ENCODE measurements at regions of chr11 and their contacts with region 1.

Region 1: DNA sequence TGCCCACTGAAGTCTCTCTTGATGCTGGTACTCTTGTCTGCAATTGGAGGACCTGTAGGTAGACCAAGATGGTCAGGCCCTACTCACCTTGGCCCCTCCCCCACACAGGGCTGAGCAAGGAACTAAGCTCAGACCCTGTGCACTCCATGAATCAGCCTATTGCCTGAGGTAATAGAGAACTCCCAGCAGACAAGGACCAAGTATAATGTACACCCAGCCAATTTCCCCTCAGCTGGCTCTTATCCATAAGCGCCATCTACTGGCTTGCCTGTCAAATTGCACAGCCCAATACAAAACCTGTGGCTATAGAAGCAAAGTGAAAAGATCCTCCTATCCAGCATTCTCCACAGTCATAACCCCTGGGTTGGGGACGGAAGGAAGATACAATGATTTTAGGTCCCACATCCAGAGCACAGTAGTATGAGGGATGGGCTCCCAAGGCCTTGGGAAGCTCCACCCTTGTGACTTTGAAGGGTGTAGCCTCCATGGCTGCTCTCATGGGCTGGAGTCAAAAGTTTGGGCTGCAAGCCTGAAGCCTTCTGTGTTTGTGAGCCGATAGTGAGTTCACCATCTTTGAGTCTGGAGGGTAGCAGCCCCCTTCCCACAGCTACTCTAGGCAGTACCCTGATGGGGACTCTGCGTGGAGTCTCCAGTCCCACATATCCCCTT is 56.0 kb downstream of the GLYATL2 start:
- DNase-seq: peak; percentile 77
- H3K4me3 ChIP-seq: no peak overlapping the region
- H3K27ac ChIP-seq: peak overlapping the region; percentile 62
- H3K4me1 ChIP-seq: peaks cover 20% of the 10 kb centered on the region
- H3K27me3 ChIP-seq: no peaks in the 10 kb centered on the region
- CTCF ChIP-seq: peak; percentile 94 to 97

Region 2: GRCh38 chr11:57426929-57427726 is 1361.4 kb before region 1 on chr11 and contains the start of gene SLC43A3:
- CTCF ChIA-PET with region 1: no interaction called
- dilution Hi-C with region 1: no loop called
- in situ Hi-C with region 1: no loop called
- intact Hi-C with region 1: no loop called
- DNase-seq: peak; percentile 93
- H3K4me3 ChIP-seq: peak within 1 kb of the TSS; percentile 37 to 58 (median 45)
- H3K27ac ChIP-seq: peak within 1 kb of the TSS; percentile 92
- H3K4me1 ChIP-seq: peaks cover 47% of the 10 kb centered on the region
- H3K27me3 ChIP-seq: no peaks in the 10 kb centered on the region
- CTCF ChIP-seq: no peak
- total RNA-seq, gene SLC43A3: 22.7 to 27.6 TPM

Region 3: DNA sequence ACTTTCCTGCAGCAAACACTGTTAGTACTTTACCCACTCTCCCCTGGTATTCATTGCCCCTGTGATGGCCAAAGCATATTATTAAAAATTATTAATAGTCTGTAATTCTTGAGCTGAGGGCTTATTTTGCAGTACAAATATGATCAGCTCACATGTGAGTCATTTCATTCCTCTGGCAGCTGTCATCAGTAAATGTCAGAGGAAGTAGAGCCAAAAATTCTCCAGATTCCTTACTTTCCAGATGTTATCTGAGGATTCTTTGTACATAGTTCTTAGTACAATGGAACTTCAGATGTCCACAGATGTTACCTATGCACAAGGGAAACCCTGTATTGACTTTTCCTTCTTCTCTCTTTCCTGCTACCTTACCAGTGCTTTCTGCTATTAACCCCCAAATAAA is 394.3 kb before region 1 on chr11:
- CTCF ChIA-PET with region 1: no interaction called
- dilution Hi-C with region 1: no loop called
- in situ Hi-C with region 1: no loop called
- intact Hi-C with region 1: no loop called
- DNase-seq: peak; percentile 73
- H3K4me3 ChIP-seq: no peak overlapping the region
- H3K27ac ChIP-seq: no peak overlapping the region
- H3K4me1 ChIP-seq: peaks cover 25% of the 10 kb centered on the region
- H3K27me3 ChIP-seq: no peaks in the 10 kb centered on the region
- CTCF ChIP-seq: no peak

Region 4: DNA sequence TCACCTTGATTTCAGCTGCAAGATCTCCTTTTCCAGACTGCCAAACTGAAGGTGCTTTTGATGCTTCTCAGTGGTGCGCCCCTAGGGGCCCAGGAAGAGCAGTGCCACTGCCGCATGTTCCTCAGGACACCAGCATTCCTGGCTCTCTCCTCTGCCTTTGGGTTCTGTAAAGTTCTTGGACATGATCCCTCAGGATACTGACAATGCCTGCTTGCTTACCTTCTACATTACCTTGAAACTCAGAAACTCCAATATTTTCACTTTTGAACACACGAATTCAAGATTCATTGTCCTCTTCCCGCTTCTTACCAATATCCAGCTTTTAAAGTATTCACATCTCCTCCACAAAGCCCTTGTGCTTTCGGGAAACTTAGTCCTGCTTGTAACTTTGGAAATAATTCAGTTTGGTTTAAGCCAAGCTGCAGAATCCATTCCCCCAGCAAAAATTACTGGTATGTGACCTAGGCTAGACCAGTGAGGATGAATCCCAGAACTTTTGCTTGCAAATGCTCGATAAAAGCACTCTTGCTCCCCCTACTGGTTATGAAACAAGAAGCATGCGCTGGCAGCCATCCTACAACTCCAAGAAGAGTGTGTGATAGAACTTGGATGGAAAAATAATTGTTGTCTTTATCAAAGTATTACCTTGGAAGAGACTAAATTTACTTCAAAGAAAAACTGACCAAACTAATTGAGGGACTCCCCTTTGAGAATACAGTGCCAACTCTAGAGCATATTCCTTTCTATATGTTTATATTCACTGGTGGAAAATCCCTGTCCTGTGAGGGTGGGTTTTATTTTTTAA is 264.1 kb before region 1 on chr11:
- CTCF ChIA-PET with region 1: no interaction called
- dilution Hi-C with region 1: no loop called
- in situ Hi-C with region 1: no loop called
- intact Hi-C with region 1: loop called (anchors 2 kb)
- DNase-seq: peak; percentile 63
- H3K4me3 ChIP-seq: no peak overlapping the region
- H3K27ac ChIP-seq: no peak overlapping the region
- H3K4me1 ChIP-seq: peaks cover 3% of the 10 kb centered on the region
- H3K27me3 ChIP-seq: no peaks in the 10 kb centered on the region
- CTCF ChIP-seq: peak; percentile 90 to 98

Region 5: GRCh38 chr11:58675334-58676155 is 112.9 kb before region 1 on chr11:
- CTCF ChIA-PET with region 1: no interaction called
- dilution Hi-C with region 1: no loop called
- in situ Hi-C with region 1: loop called in 1 of 2 experiments (anchors 10 kb)
- intact Hi-C with region 1: loop called (anchors 1 kb)
- DNase-seq: peak; percentile 44
- H3K4me3 ChIP-seq: no peak overlapping the region
- H3K27ac ChIP-seq: no peak overlapping the region
- H3K4me1 ChIP-seq: peaks cover 5% of the 10 kb centered on the region
- H3K27me3 ChIP-seq: no peaks in the 10 kb centered on the region
- CTCF ChIP-seq: peak; percentile 97 to 99

Region 6: DNA sequence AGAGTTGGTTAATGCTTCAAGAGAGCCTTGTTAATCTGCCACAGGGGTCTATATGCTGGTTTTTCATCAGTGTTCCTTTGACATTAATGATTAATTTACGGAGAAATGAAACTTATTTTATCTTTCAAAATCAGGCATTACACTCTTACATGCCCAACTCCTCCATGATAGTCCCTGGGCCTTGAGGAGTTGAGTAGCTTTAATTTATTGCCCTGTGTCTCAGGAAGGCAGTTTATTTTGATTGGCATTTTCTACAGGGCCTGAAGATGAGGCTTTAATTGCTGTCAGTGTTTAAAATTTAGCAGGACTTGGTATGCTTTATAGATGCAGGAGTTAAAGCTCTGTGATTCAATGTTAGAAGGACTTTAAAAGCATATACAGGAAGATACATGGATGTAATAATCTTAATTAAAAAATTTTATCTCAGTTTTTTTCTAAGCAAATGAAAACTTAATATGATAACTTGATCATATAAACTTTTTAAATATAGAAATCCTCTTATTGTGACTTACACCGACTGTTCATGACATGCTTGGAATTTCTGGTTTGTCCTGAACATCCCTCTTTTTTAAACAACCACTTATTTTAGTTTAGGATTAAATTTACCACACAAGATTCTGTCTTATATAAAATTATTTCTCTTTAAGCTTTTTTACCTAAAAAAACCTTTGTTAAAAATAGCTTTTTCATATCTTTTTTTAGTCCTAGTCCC is 68.9 kb before region 1 on chr11:
- CTCF ChIA-PET with region 1: no interaction called
- dilution Hi-C with region 1: no loop called
- in situ Hi-C with region 1: no loop called
- intact Hi-C with region 1: loop called (anchors 1 kb)
- DNase-seq: no peak
- H3K4me3 ChIP-seq: no peak overlapping the region
- H3K27ac ChIP-seq: no peak overlapping the region
- H3K4me1 ChIP-seq: no peaks in the 10 kb centered on the region
- H3K27me3 ChIP-seq: no peaks in the 10 kb centered on the region
- CTCF ChIP-seq: no peak

Region 7: GRCh38 chr11:58957923-58958322 is 169.4 kb after region 1 on chr11:
- CTCF ChIA-PET with region 1: no interaction called
- dilution Hi-C with region 1: no loop called
- in situ Hi-C with region 1: no loop called
- intact Hi-C with region 1: no loop called
- DNase-seq: no peak
- H3K4me3 ChIP-seq: no peak overlapping the region
- H3K27ac ChIP-seq: no peak overlapping the region
- H3K4me1 ChIP-seq: no peaks in the 10 kb centered on the region
- H3K27me3 ChIP-seq: peaks cover 3% of the 10 kb centered on the region
- CTCF ChIP-seq: no peak